Ascending aorta (tissue), 2 donors: ENCODE measurements at regions of chr19 and their contacts with region 1.

Region 1: DNA sequence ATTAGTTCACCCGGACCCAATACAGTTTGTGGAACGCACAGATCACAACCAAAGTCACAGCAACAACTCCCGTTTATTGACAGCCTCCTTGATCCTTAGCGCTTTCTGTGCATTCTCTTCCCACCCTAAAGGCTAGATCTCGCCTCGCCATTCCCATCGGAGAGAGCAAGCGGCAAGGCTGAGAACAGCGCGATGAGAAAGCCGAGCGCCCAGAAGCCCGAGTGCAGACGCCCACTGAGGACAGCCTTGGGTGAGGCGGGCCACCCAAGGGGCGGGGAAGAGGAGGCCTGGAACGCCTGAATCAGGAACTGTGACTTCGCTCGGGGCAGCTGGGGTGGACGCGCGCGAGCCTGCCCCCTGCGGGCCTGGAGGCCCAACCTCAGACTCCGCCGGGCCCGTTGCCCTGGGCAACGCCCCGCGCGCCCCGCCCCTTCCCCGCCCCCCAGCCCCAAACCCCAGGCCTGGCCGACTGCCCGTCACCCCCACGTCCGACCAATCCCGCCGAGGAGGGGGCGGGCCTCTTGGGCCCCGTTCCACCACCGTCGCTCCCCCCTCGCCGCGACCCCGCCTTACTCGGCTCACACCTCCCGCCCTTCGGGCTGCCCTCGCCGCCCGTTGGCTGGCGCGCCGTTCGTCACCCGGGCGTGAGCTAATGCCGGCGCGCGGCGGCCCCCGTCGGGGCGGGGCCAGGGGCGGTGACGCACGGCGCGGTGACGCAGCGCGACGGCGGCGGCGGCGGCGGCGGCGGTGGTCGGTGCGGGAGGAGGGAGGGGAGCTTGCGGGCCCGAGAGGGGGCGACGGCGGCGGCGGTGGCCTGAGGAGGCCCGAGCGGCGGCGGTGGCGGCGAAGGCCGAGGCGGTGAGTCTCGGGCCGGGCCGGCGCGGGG is at the start of gene SAMD4B:
- DNase-seq: peak; percentile 91 to 99
- H3K4me3 ChIP-seq: peak within 1 kb of the TSS; percentile 97
- H3K27ac ChIP-seq: peak within 1 kb of the TSS; percentile 90 to 91
- H3K4me1 ChIP-seq: peaks cover 11 to 36% of the 10 kb centered on the region in 2 donors
- H3K27me3 ChIP-seq: no peaks in the 10 kb centered on the region
- CTCF ChIP-seq: peak; percentile 77 to 91 (median 82)
- total RNA-seq, gene SAMD4B: 358 TPM

Region 2: DNA sequence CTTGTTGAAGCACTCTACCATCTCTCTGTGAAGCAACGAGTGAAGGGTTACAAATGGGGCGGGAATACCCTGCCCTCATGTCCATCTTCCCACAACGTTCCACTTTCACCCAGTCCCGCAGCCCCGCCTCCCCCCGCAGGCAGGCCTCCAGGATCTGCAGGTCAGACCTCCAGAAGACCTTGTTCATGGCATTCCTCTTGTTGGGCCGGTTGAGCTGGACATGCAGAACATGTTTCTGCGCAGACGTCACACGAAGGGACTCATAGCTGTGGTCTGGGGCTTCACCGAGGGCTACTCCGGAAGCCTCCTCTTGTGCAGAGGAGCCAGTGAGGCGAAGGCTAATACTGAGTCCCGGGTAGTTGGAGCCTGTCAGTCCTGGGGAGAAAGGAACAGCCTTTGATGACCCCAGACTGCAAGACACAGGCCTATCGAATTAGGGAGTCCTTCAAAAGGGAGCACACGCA is 510.8 kb before region 1 on chr19:
- intact Hi-C with region 1: loop called (anchors 5 kb)
- DNase-seq: peak; percentile 45 to 89
- H3K4me3 ChIP-seq: peak overlapping the region; percentile 71 to 77
- H3K27ac ChIP-seq: peak overlapping the region; percentile 82 to 91
- H3K4me1 ChIP-seq: peaks cover 6 to 25% of the 10 kb centered on the region in 2 donors
- H3K27me3 ChIP-seq: no peaks in the 10 kb centered on the region
- CTCF ChIP-seq: no peak

Region 3: GRCh38 chr19:39125554-39126311 is 216.2 kb before region 1 on chr19 and contains the start of gene PAK4:
- intact Hi-C with region 1: loop called (anchors 1 kb)
- DNase-seq: peak; percentile 90 to 99
- H3K4me3 ChIP-seq: peak within 1 kb of the TSS; percentile 88 to 89
- H3K27ac ChIP-seq: peak within 1 kb of the TSS; percentile 59 to 68
- H3K4me1 ChIP-seq: peaks cover 9 to 24% of the 10 kb centered on the region in 2 donors
- H3K27me3 ChIP-seq: no peaks in the 10 kb centered on the region
- CTCF ChIP-seq: no peak
- total RNA-seq, gene PAK4: 27.4 TPM

Region 4: DNA sequence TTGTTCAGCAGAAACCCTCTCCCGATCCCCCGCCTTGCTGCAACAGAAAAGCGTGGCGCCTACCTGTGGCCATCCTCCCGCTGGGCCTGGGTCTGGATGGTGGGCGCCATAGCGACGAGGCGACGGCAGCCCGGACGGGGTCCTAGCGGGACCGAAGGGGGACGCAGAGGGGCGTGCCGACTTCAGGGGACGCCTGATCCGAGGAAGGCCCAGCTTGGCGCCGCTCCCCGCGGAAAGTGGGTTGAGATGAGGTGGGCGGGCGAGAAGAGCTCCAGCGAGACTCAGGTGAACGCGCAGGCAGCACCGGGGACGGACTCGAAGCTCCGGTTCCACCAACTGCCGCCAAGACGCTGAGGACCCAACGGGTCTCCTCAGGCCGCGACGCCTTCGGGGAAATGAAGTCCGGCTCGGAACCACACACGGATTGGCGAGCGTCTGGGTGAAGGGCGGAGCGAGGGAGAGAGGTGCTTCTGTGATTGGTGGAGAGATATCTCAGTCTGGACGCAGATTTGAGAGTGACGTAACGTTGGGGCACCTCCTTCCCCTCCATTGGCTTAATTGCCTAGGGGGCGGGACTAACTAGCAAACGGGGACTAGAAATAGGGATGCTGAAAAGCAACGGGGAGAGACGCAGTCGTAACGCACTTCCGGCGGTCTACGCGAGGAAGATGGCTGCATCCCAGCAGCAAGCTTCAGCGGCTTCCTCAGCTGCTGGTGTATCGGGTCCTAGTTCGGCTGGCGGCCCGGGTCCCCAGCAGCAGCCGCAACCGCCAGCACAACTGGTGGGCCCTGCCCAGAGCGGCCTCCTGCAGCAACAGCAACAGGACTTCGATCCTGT is 49.0 kb after region 1 on chr19 and contains the starts of genes MED29 and PAF1:
- intact Hi-C with region 1: loop called (anchors 2 kb)
- DNase-seq: peak; percentile 94 to 99
- H3K4me3 ChIP-seq: peak within 1 kb of the TSS; percentile 78 to 93
- H3K27ac ChIP-seq: peak within 1 kb of the TSS; percentile 98 to 100
- H3K4me1 ChIP-seq: peaks cover 8 to 21% of the 10 kb centered on the region in 2 donors
- H3K27me3 ChIP-seq: no peaks in the 10 kb centered on the region
- CTCF ChIP-seq: peak in 1 of 3 experiments; percentile 8
- total RNA-seq, gene MED29: 60.8 TPM
- total RNA-seq, gene PAF1: 12.7 TPM

Region 5: GRCh38 chr19:39445265-39446111 is 103.5 kb after region 1 on chr19 and contains the start of gene SUPT5H:
- intact Hi-C with region 1: loop called (anchors 2 kb)
- DNase-seq: peak; percentile 88 to 99
- H3K4me3 ChIP-seq: peak within 1 kb of the TSS; percentile 86 to 92
- H3K27ac ChIP-seq: peak within 1 kb of the TSS; percentile 91 to 96
- H3K4me1 ChIP-seq: peaks cover 13 to 32% of the 10 kb centered on the region in 2 donors
- H3K27me3 ChIP-seq: no peaks in the 10 kb centered on the region
- CTCF ChIP-seq: no peak
- total RNA-seq, gene SUPT5H: 142 TPM

Region 6: DNA sequence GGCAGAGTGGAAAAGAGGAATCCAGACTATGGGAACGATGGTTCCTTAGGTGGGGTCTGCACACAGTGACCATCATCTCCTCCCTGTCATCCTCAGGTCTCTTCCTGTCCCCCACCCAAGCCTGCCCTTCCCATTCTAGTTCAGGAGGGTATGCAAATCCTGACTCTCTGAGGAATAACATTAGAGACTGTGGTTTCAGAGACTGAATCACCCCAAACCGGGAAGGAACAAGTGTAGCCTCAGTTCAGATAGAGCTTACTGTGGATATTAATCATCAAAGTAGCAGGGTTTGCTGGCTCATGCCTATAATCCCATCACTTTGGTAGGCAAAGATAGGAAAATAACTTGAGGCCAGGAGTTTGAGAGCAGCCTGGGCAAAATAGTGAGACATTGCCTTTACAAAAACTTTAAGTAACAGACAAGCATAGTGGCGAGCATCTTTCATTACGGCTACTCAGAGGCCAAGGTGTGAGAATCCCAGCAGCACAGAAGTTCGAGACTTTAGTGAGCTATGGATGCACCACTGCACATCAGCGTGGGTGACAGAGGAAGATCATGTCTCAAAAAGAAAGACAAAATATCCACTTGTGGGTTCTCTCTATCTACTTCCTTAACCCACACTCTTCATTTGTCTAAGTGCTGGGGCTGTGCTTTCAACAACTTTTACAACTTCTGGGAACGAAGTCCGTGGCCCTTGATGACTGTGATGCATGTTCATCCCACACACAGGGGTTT is 241.1 kb after region 1 on chr19:
- intact Hi-C with region 1: no loop called
- DNase-seq: no peak
- H3K4me3 ChIP-seq: no peak overlapping the region
- H3K27ac ChIP-seq: no peak overlapping the region
- H3K4me1 ChIP-seq: no peaks in the 10 kb centered on the region
- H3K27me3 ChIP-seq: no peaks in the 10 kb centered on the region
- CTCF ChIP-seq: no peak

Region 7: GRCh38 chr19:39805104-39805503 is 463.1 kb after region 1 on chr19:
- intact Hi-C with region 1: no loop called
- DNase-seq: no peak
- H3K4me3 ChIP-seq: no peak overlapping the region
- H3K27ac ChIP-seq: no peak overlapping the region
- H3K4me1 ChIP-seq: no peaks in the 10 kb centered on the region
- H3K27me3 ChIP-seq: no peaks in the 10 kb centered on the region
- CTCF ChIP-seq: no peak

Region 8: DNA sequence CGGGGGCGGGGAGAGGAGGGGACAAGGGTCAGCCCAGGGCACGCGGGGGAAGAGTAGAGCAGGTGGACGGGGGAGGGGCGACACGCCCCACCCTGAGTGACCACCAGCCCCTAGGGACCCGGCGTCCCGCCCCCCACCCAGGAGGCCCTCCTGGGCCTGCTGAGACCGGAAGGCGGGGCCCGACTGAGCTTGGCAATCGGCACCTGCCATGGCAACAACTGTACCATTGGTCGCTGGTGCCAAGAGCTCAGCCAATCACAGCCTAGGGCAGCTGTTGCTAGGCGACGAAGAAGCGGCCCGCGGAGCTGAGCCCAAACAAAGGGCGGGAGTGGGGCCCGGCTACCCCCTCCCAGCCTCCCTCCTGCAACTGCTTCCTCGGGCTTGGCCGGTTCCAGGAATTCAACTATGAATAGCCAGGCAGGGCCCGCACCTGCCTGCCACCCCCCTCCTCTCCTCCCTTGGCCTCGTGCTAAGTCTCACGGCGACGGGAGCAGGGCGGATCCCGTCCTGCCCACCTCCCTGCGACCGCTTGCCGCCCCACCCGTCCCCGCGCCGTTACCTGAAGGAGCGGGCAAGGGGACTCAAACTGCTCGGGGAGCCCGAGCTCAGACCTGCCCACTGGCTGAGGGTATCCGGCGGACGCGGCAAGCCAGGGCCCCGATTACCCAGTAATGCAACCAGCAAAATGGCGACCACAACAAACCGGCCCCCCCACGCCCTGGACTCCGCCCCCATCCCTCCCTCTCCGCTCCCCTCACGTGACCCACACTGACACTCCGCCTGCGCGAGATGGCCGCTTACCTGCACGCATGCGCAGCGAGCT is 491.7 kb after region 1 on chr19 and contains the start of gene DYRK1B:
- intact Hi-C with region 1: loop called (anchors 10 kb)
- DNase-seq: peak; percentile 91 to 99
- H3K4me3 ChIP-seq: peak within 1 kb of the TSS; percentile 75 to 99
- H3K27ac ChIP-seq: peak within 1 kb of the TSS; percentile 77 to 93
- H3K4me1 ChIP-seq: peaks cover 0 to 17% of the 10 kb centered on the region in 2 donors
- H3K27me3 ChIP-seq: no peaks in the 10 kb centered on the region
- CTCF ChIP-seq: no peak
- total RNA-seq, gene DYRK1B: 34.7 TPM